PC-9 (cell line): ENCODE measurements at regions of chr2 and their contacts with region 1.

Region 1: GRCh38 chr2:32553829-32554432 is 73.9 kb upstream of the TTC27 start:
- DNase-seq: no peak
- H3K4me3 ChIP-seq: no peak overlapping the region
- H3K27ac ChIP-seq: no peak overlapping the region
- H3K4me1 ChIP-seq: no peaks in the 10 kb centered on the region
- H3K27me3 ChIP-seq: no peaks in the 10 kb centered on the region
- CTCF ChIP-seq: peak; percentile 85

Region 2: GRCh38 chr2:32688511-32688910 is 134.6 kb after region 1 on chr2:
- CTCF ChIA-PET with region 1: no interaction called
- POLR2A ChIA-PET with region 1: no interaction called
- intact Hi-C with region 1: no loop called
- DNase-seq: peak in 1 of 2 experiments; percentile 40
- H3K4me3 ChIP-seq: no peak overlapping the region
- H3K27ac ChIP-seq: no peak overlapping the region
- H3K4me1 ChIP-seq: no peaks in the 10 kb centered on the region
- H3K27me3 ChIP-seq: no peaks in the 10 kb centered on the region
- CTCF ChIP-seq: no peak

Region 3: DNA sequence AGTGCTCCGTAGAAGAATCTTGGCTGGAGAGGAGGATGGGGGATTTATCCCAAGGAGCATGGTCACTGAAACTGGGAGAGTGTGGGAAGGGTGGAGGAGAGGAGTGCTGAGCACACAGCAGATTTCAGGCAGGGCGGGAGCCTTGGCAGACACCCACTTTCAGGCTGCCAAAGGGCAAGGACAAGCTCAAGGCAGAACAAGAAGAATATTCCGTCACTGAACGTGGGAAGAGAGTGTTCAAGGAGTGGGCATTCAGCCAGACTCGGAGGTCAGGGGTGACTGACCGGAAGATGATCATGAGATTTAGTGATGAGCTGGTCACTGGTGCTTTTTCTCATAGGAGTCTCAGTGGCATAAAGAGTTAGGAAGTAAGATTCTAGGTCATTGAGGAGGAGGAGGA is 786.3 kb after region 1 on chr2:
- CTCF ChIA-PET with region 1: no interaction called
- POLR2A ChIA-PET with region 1: no interaction called
- intact Hi-C with region 1: no loop called
- DNase-seq: no peak
- H3K4me3 ChIP-seq: no peak overlapping the region
- H3K27ac ChIP-seq: no peak overlapping the region
- H3K4me1 ChIP-seq: no peaks in the 10 kb centered on the region
- H3K27me3 ChIP-seq: no peaks in the 10 kb centered on the region
- CTCF ChIP-seq: no peak

Region 4: DNA sequence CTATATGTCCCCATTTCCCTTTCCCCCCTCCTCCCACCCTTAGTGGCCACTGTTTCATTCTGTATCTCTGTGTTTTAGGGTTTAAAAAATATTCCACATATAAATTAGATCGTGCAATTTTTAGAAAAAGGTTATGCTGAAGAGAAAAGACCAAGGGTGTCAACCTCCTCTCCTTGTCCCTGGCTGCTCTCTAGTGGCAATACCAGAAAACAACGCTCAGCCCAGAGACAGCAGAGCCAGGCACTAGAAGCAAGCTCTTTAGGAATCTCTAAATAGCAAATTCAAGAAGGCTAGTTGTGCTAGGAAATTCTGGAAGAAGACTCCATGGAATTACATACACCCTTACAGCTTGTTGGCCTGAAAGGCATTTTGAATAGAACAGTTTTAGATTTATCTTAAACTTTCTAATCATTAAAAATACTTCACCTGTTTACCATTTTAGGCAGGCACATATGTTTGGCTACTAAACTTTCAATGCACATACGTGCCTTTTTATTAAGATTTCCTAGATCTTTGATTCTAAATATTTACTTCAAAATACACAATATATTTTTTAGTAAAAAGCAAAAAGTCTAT is 887.4 kb after region 1 on chr2:
- CTCF ChIA-PET with region 1: no interaction called
- POLR2A ChIA-PET with region 1: no interaction called
- intact Hi-C with region 1: loop called (anchors 2 kb)
- DNase-seq: peak in 1 of 2 experiments; percentile 37
- H3K4me3 ChIP-seq: no peak overlapping the region
- H3K27ac ChIP-seq: no peak overlapping the region
- H3K4me1 ChIP-seq: no peaks in the 10 kb centered on the region
- H3K27me3 ChIP-seq: no peaks in the 10 kb centered on the region
- CTCF ChIP-seq: peak; percentile 77